Panc1 (cell line): ENCODE measurements at regions of chr5 and their contacts with region 1.

Region 1: DNA sequence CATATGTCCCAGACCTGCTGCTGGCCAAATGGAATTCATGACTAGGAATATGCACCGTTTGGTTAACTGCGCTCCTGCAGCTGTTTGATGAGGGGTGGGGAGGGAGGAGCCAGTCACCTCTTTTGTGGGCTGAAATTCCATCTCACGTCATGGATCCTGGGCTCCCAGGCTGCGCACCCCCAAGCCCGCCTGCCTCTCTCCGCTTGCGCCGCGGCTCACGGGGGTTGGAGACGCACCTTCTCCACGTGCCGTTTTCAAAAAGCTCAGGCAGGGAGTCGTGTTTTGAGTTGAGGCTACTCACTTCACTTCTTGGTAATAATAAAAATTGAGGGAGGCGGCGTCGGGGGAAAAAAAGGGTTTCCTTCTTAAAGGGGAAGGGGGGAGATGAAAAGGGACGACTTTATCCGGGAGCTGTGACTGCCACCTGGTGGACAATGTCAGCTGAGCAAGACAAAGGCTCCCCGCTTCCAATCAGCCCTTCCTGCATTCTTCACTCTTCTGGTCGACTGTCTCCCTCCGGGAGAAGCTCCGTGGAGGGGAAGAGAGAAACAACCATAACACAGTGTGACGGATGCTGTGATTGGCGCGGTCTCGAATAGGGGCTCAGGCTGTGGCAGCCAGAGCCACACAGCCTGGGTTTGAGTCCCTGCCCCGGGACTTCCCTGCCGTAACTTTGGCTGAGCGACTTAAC is 15.9 kb upstream of the C5orf47 start:
- DNase-seq: peak; percentile 67
- ATAC-seq: peak; percentile 75
- H3K4me3 ChIP-seq: peak overlapping the region; percentile 32 to 59
- H3K27ac ChIP-seq: 0 out of 2 replicates have a peak overlapping the region, but pooled peaks have one; percentile 13
- H3K4me1 ChIP-seq: peaks cover 18% of the 10 kb centered on the region
- H3K27me3 ChIP-seq: no peaks in the 10 kb centered on the region
- CTCF ChIP-seq: peak; percentile 88

Region 2: GRCh38 chr5:173057062-173057924 is 915.8 kb before region 1 on chr5:
- CTCF ChIA-PET with region 1: no interaction called
- POLR2A ChIA-PET with region 1: interaction called, 11 read pairs
- in situ Hi-C with region 1: no loop called
- intact Hi-C with region 1: no loop called
- DNase-seq: peak; percentile 95
- ATAC-seq: peak; percentile 94
- H3K4me3 ChIP-seq: peak overlapping the region; percentile 57 to 77
- H3K27ac ChIP-seq: peak overlapping the region; percentile 94
- H3K4me1 ChIP-seq: peaks cover 14% of the 10 kb centered on the region
- H3K27me3 ChIP-seq: no peaks in the 10 kb centered on the region
- CTCF ChIP-seq: no peak

Region 3: GRCh38 chr5:173887610-173888472 is 85.2 kb before region 1 on chr5 and contains the start of gene CPEB4:
- CTCF ChIA-PET with region 1: no interaction called
- POLR2A ChIA-PET with region 1: no interaction called
- in situ Hi-C with region 1: no loop called
- intact Hi-C with region 1: loop called (anchors 5 kb)
- DNase-seq: peak; percentile 97
- ATAC-seq: peak; percentile 99
- H3K4me3 ChIP-seq: peak within 1 kb of the TSS; percentile 74 to 84
- H3K27ac ChIP-seq: peak within 1 kb of the TSS; percentile 98
- H3K4me1 ChIP-seq: peaks cover 23% of the 10 kb centered on the region
- H3K27me3 ChIP-seq: no peaks in the 10 kb centered on the region
- CTCF ChIP-seq: no peak
- total RNA-seq, gene CPEB4: 27.7 TPM

Region 4: GRCh38 chr5:174596429-174596828 is 623.4 kb after region 1 on chr5:
- CTCF ChIA-PET with region 1: no interaction called
- POLR2A ChIA-PET with region 1: no interaction called
- in situ Hi-C with region 1: no loop called
- intact Hi-C with region 1: no loop called
- DNase-seq: no peak
- ATAC-seq: no peak
- H3K4me3 ChIP-seq: no peak overlapping the region
- H3K27ac ChIP-seq: no peak overlapping the region
- H3K4me1 ChIP-seq: 0 out of 2 replicates have a peak, but pooled peaks cover 4% of the 10 kb centered on the region
- H3K27me3 ChIP-seq: no peaks in the 10 kb centered on the region
- CTCF ChIP-seq: no peak